Heart right ventricle (tissue), 16 donors: ENCODE measurements at regions of chr12 and their contacts with region 1.

Region 1: DNA sequence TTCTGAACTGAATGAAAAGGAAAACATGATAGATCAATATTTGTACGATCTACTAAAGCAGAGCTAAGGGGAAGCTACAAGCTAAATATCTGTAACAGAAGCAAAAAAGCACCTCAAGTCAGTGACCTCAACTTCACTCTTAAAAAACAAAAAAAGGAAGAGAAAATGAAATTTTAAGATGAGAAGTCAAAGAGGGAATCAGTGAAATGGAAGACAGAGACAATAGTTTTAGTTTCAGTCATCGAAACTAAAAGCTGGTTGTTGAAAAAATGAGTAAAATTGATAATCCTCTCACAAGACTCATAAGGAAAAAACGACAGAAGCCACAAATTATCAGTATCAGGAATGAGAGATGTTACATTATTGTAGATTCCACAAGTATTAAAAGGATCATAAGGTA is 11.9 kb upstream of the SLC2A13 start:
- DNase-seq: no peak
- ATAC-seq: no peak
- H3K4me3 ChIP-seq: no peak overlapping the region
- H3K27ac ChIP-seq: no peak overlapping the region
- H3K4me1 ChIP-seq: no peaks in the 10 kb centered on the region
- H3K27me3 ChIP-seq: no peaks in the 10 kb centered on the region
- CTCF ChIP-seq: no peak

Region 2: GRCh38 chr12:39764944-39765560 is 352.8 kb before region 1 on chr12:
- intact Hi-C with region 1: loop called in 3 of 10 experiments (anchors 5 to 10 kb)
- DNase-seq: no peak
- ATAC-seq: peak in 1 of 8 donors; percentile 46
- H3K4me3 ChIP-seq: no peak overlapping the region
- H3K27ac ChIP-seq: no peak overlapping the region
- H3K4me1 ChIP-seq: peaks cover 0 to 5% (median 0%) of the 10 kb centered on the region in 9 donors
- H3K27me3 ChIP-seq: no peaks in the 10 kb centered on the region
- CTCF ChIP-seq: peak; percentile 35 to 83 (median 71)

Region 3: DNA sequence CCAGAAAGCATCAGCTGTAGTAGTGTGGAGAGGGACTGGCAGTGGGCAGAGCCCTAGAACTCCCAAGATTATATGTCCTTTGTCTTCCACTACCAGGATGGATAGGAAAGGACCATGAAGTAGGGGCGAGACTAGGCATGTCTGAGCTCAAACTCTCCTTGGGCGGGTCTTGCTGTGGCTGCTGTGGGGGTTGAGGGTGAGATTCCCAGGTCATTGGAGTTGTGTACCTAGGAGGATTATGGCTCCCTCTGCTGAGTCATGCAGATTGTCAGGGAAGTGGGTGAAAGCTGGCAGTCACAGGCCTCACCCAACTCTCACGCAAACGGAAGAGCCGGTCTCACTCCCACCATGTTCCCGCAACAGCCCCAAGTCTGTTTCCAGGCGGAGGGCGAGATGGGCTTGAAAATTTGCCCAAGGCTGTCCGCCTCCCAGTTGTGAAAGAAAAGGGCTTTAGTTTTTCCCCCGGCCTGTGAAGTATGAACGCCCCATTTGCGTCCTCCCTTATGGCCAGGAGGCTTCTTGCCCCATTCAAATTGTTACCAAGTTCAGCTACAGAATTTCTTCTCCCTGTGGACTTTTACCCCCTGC is 171.4 kb before region 1 on chr12:
- intact Hi-C with region 1: no loop called
- DNase-seq: no peak
- ATAC-seq: no peak
- H3K4me3 ChIP-seq: no peak overlapping the region
- H3K27ac ChIP-seq: no peak overlapping the region
- H3K4me1 ChIP-seq: no peaks in the 10 kb centered on the region
- H3K27me3 ChIP-seq: no peaks in the 10 kb centered on the region
- CTCF ChIP-seq: no peak

Region 4: GRCh38 chr12:39990122-39991101 is 127.4 kb before region 1 on chr12:
- intact Hi-C with region 1: no loop called
- DNase-seq: peak; percentile 35 to 40
- ATAC-seq: peak in 7 of 8 donors; percentile 26 to 69 (median 56)
- H3K4me3 ChIP-seq: no peak overlapping the region
- H3K27ac ChIP-seq: no peak overlapping the region
- H3K4me1 ChIP-seq: peaks cover 0 to 6% (median 0%) of the 10 kb centered on the region in 9 donors
- H3K27me3 ChIP-seq: no peaks in the 10 kb centered on the region
- CTCF ChIP-seq: peak; percentile 63 to 85 (median 76)